ENCODE measurements at regions of chr18 and their contacts with region 1.

Region 1: DNA sequence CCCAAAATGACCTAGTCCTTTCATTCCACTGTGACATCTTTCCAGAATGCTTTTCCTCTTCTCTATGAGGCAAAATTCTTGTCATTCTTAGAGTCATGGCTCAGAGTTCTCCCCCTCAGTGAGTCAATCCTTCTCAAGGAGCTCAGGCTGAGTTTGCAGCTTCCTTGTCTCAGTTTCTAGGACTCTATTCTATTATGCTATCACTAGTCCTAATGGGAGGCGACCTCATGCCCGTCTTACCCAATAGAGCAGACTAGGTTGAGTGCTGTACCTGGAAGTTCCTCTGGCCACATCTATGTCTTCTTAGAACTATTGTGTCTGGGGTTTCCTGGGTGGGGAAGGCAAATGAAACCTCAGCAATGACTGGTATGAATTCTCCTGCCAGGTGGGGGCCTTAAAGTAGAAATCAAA is 51.5 kb downstream of the HAUS1 start:
- DNase-seq: peak; percentile 61
- H3K4me3 Mint-ChIP-seq: peak overlapping the region; percentile 66
- H3K27ac Mint-ChIP-seq: peak overlapping the region; percentile 95
- H3K4me1 Mint-ChIP-seq: peaks cover 51% of the 10 kb centered on the region
- H3K27me3 Mint-ChIP-seq: no peaks in the 10 kb centered on the region

Region 2: GRCh38 chr18:46104128-46104911 is 51.3 kb before region 1 on chr18 and contains the start of gene HAUS1:
- intact Hi-C with region 1: loop called (anchors 5 kb)
- DNase-seq: peak; percentile 74
- H3K4me3 Mint-ChIP-seq: peak within 1 kb of the TSS; percentile 98
- H3K27ac Mint-ChIP-seq: peak within 1 kb of the TSS; percentile 95
- H3K4me1 Mint-ChIP-seq: peaks cover 20% of the 10 kb centered on the region
- H3K27me3 Mint-ChIP-seq: no peaks in the 10 kb centered on the region
- total RNA-seq, gene HAUS1: 52.3 and 58.1 TPM in 2 replicates

Region 3: GRCh38 chr18:46324087-46324958 is 168.7 kb after region 1 on chr18:
- intact Hi-C with region 1: loop called (anchors 10 kb)
- DNase-seq: no peak
- H3K4me3 Mint-ChIP-seq: no peak overlapping the region
- H3K27ac Mint-ChIP-seq: no peak overlapping the region
- H3K4me1 Mint-ChIP-seq: peaks cover 6% of the 10 kb centered on the region
- H3K27me3 Mint-ChIP-seq: peaks cover 5% of the 10 kb centered on the region

Measured in activated T-helper 2 cell treated with anti-CD3 and anti-CD28 coated beads, Interferon-gamma antibody, Interleukin-2, Interleukin-4, amounts not matched to agents 10 μg/mL and 5 μg/mL and 100 μg/mL, durations not matched to agents 14 hours and 24 hours and 36 hours (primary cell).